CD4-positive, alpha-beta memory T cell (primary cell): ENCODE measurements at regions of chr17 and their contacts with region 1.

Region 1: DNA sequence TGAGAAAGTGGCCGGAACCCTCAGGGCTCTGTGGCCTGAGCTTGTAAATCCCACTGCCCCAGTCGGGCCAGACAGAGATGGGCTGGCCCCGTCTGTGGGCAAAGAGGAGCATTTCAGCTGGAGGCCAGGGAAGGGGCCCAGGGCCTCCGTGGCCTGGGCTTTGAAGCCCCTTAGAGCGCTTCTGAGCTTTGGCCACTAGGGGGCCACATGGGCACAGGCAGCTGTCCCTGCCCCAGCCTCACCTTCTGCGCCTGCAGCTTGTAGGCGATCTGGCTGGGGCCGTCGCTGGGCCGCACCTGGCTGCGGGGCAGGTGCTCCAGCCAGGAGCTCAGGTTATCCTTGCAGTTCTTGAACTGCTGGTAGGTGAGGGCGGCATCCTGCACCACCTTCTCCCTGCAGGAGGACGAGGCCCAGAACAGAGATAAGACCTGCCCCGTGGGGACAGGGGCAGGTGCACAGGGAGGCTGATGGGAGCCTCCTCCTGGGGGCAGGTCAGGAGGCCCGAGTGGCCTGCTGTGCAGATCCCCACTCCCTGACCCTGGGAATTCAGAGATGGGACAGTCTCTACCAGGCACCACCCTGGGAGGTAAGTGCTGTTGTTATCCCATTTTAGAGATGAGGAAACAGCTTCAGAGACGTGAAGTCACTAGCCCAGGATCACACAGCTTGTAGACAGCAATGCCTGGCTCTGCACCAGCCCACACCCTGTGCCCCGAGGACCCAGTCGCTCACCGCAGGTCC is 12.8 kb downstream of the EVPL start:
- DNase-seq: peak; percentile 72 to 79 (median 74)
- H3K4me3 ChIP-seq: no peak overlapping the region
- H3K4me3 Mint-ChIP-seq: peak overlapping the region in 2 of 8 donors; percentile 34 to 52
- H3K27ac ChIP-seq: no peak overlapping the region
- H3K27ac Mint-ChIP-seq: peak overlapping the region in 2 of 7 donors; percentile 50 to 81
- H3K4me1 ChIP-seq: peaks cover 8% of the 10 kb centered on the region
- H3K4me1 Mint-ChIP-seq: peaks cover 3 to 11% (median 6%) of the 10 kb centered on the region in 4 donors
- H3K27me3 ChIP-seq: no peaks in the 10 kb centered on the region
- H3K27me3 Mint-ChIP-seq: no peaks in the 10 kb centered on the region

Region 2: DNA sequence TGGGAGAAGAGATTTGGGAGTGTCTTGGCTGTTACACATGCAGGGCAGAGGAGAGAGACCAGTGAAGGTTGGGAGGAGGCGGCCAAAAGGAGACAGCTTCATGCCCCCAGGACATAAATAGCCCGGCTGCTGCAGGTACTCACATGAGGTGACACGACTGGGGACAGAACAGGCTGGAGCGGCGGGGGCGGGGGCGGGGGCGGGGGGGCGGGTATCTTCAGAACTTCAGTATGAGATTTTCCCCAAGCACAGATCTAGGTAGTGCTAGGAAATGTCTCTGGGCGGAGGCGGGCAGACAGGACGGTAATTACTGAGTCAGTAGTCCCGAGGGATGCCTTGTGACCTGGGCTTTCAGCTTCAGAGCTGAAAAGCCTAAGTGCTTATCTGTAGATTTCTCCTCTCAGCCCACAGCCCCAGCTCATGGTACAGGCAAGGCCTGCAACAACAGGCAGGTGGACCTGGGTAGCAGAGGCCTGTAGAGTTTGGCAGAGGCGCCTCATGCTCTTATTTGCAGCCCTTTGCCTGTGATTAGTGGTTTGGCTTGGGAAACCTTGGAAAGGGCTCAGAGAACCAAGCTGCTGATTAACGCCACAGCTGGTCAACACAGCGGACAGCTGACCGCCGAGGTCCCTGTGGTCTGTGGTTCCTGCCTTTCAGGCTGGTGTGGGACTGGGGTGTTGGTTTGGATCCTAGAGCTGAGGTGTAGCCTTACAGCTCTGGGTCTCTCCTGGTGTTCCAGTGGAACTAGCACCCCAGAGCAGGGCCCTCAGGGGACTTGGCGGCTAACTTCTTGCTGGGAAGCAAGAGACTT is 205.2 kb before region 1 on chr17:
- CTCF ChIA-PET with region 1: no interaction called
- POLR2A ChIA-PET with region 1: no interaction called
- intact Hi-C with region 1: no loop called
- DNase-seq: no peak
- H3K4me3 ChIP-seq: no peak overlapping the region
- H3K4me3 Mint-ChIP-seq: no peak overlapping the region
- H3K27ac ChIP-seq: no peak overlapping the region
- H3K27ac Mint-ChIP-seq: peak overlapping the region in 4 of 7 donors; percentile 42 to 79 (median 69)
- H3K4me1 ChIP-seq: no peaks in the 10 kb centered on the region
- H3K4me1 Mint-ChIP-seq: peaks cover 0 to 4% (median 1%) of the 10 kb centered on the region in 4 donors
- H3K27me3 ChIP-seq: no peaks in the 10 kb centered on the region
- H3K27me3 Mint-ChIP-seq: no peaks in the 10 kb centered on the region

Region 3: DNA sequence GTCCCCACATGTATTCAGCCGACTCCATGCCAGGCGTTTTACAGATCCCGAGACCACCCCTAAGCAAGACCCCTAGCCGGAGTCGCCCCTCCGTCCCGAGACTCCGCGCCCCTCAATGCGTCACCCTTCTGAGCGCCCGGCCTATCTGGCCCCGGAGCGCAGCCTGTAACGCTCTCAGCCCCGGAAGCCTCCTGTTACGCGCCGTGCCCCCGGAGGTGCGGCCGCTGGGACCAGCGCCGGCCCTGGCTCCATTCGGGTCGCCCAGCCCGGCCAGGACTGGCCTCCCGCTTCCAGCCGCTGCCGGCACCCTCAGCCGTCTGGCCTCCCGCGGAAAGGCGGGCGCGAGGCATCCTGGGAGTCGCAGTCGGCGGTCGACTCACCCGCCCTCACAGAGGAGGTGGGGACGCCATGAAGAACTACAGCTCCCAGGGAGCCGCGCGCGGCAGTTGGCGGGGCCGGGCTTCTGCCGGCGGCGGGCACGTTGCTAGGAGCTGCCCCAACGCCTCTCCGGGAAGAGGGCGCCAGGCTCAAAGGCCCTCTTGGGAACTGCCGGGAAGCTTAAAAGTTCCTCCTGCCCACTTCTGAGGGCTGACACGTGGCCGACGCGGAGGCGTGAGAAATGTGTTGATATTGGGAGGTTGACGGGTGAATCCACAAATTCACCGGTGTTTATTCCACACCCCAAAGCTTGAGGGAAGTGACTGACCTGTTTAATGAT is 73.5 kb before region 1 on chr17 and contains the start of gene FBF1:
- CTCF ChIA-PET with region 1: no interaction called
- POLR2A ChIA-PET with region 1: no interaction called
- intact Hi-C with region 1: no loop called
- DNase-seq: peak; percentile 82 to 89 (median 84)
- H3K4me3 ChIP-seq: peak within 1 kb of the TSS; percentile 63 to 74
- H3K4me3 Mint-ChIP-seq: peak within 1 kb of the TSS; percentile 84 to 93 (median 90)
- H3K27ac ChIP-seq: peak within 1 kb of the TSS; percentile 86
- H3K27ac Mint-ChIP-seq: peak within 1 kb of the TSS; percentile 48 to 96 (median 92)
- H3K4me1 ChIP-seq: peaks cover 10% of the 10 kb centered on the region
- H3K4me1 Mint-ChIP-seq: peaks cover 7 to 14% (median 10%) of the 10 kb centered on the region in 4 donors
- H3K27me3 ChIP-seq: no peaks in the 10 kb centered on the region
- H3K27me3 Mint-ChIP-seq: no peaks in the 10 kb centered on the region
- total RNA-seq, gene FBF1: 39.6 to 42.7 TPM

Region 4: GRCh38 chr17:76000016-76000754 is 14.2 kb before region 1 on chr17:
- CTCF ChIA-PET with region 1: interaction called, 27 read pairs
- POLR2A ChIA-PET with region 1: no interaction called
- intact Hi-C with region 1: no loop called
- DNase-seq: peak; percentile 51 to 59 (median 53)
- H3K4me3 ChIP-seq: no peak overlapping the region
- H3K4me3 Mint-ChIP-seq: no peak overlapping the region
- H3K27ac ChIP-seq: no peak overlapping the region
- H3K27ac Mint-ChIP-seq: no peak overlapping the region
- H3K4me1 ChIP-seq: peaks cover 14% of the 10 kb centered on the region
- H3K4me1 Mint-ChIP-seq: peaks cover 10 to 26% (median 15%) of the 10 kb centered on the region in 4 donors
- H3K27me3 ChIP-seq: no peaks in the 10 kb centered on the region
- H3K27me3 Mint-ChIP-seq: no peaks in the 10 kb centered on the region

Region 5: GRCh38 chr17:76053246-76054116 is 39.1 kb after region 1 on chr17:
- CTCF ChIA-PET with region 1: interaction called, 19 read pairs
- POLR2A ChIA-PET with region 1: no interaction called
- intact Hi-C with region 1: no loop called
- DNase-seq: no peak
- H3K4me3 ChIP-seq: no peak overlapping the region
- H3K4me3 Mint-ChIP-seq: no peak overlapping the region
- H3K27ac ChIP-seq: no peak overlapping the region
- H3K27ac Mint-ChIP-seq: peak overlapping the region in 4 of 7 donors; percentile 31 to 52 (median 42)
- H3K4me1 ChIP-seq: peaks cover 6% of the 10 kb centered on the region
- H3K4me1 Mint-ChIP-seq: peaks cover 14 to 23% (median 20%) of the 10 kb centered on the region in 4 donors
- H3K27me3 ChIP-seq: no peaks in the 10 kb centered on the region
- H3K27me3 Mint-ChIP-seq: no peaks in the 10 kb centered on the region

Region 6: DNA sequence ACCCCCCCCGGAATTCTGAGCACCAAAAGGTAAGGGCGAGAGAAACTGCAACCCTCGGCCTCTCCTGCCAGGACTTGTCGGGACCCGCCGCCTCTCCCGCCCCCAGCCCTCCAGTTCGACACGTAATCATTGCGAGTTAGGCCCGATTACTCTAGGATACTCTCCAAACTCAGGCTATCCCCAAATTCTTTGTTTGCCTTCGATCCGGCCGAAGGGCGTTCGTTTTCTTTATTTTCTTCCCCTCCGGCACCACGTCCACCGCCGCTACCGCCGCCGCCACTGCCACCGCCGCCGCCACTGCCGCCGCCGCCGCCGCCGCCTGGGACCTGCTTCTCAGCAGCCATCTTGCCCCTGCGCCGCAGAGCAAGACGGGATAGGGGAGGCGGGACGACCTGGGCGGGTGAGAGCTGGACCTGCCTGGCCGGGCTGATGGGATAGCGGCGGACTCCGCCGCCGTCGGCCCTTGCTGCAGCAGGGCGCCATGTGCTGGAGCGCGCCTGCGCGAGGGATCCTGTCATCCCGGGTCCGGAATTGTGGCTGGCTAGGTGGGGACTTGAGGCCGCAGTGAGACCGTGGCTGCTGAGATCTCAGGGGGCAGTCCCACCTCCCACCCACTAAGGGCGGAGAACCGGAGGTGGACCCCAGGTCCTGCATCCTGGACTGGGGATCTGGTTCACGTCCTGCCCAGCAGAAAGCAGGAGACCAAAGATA is 57.9 kb after region 1 on chr17 and contains the start of gene SRP68:
- CTCF ChIA-PET with region 1: no interaction called
- POLR2A ChIA-PET with region 1: interaction called, 5 read pairs
- intact Hi-C with region 1: loop called (anchors 2 kb)
- DNase-seq: peak; percentile 73 to 80 (median 77)
- H3K4me3 ChIP-seq: peak within 1 kb of the TSS; percentile 81 to 97
- H3K4me3 Mint-ChIP-seq: peak within 1 kb of the TSS; percentile 95 to 98 (median 97)
- H3K27ac ChIP-seq: peak within 1 kb of the TSS; percentile 86
- H3K27ac Mint-ChIP-seq: peak within 1 kb of the TSS; percentile 89 to 98 (median 97)
- H3K4me1 ChIP-seq: peaks cover 56% of the 10 kb centered on the region
- H3K4me1 Mint-ChIP-seq: peaks cover 31 to 60% (median 46%) of the 10 kb centered on the region in 4 donors
- H3K27me3 ChIP-seq: peaks cover 22% of the 10 kb centered on the region
- H3K27me3 Mint-ChIP-seq: peaks cover 17 to 21% of the 10 kb centered on the region in 2 donors
- total RNA-seq, gene SRP68: 86.5 to 92.4 TPM

Region 7: GRCh38 chr17:76121932-76122430 is 107.6 kb after region 1 on chr17:
- CTCF ChIA-PET with region 1: interaction called, 7 read pairs
- POLR2A ChIA-PET with region 1: no interaction called
- intact Hi-C with region 1: loop called (anchors 5 kb)
- DNase-seq: no peak
- H3K4me3 ChIP-seq: peak overlapping the region in 1 of 2 donors; percentile 60
- H3K4me3 Mint-ChIP-seq: peak overlapping the region in 4 of 8 donors; percentile 21 to 49 (median 37)
- H3K27ac ChIP-seq: peak overlapping the region; percentile 29
- H3K27ac Mint-ChIP-seq: peak overlapping the region in 6 of 7 donors; percentile 21 to 86 (median 65)
- H3K4me1 ChIP-seq: peaks cover 10% of the 10 kb centered on the region
- H3K4me1 Mint-ChIP-seq: peaks cover 4 to 12% (median 8%) of the 10 kb centered on the region in 4 donors
- H3K27me3 ChIP-seq: no peaks in the 10 kb centered on the region
- H3K27me3 Mint-ChIP-seq: no peaks in the 10 kb centered on the region

Region 8: GRCh38 chr17:76204277-76204676 is 189.9 kb after region 1 on chr17:
- CTCF ChIA-PET with region 1: no interaction called
- POLR2A ChIA-PET with region 1: no interaction called
- intact Hi-C with region 1: no loop called
- DNase-seq: no peak
- H3K4me3 ChIP-seq: no peak overlapping the region
- H3K4me3 Mint-ChIP-seq: no peak overlapping the region
- H3K27ac ChIP-seq: no peak overlapping the region
- H3K27ac Mint-ChIP-seq: peak overlapping the region in 4 of 7 donors; percentile 53 to 70 (median 56)
- H3K4me1 ChIP-seq: peaks cover 73% of the 10 kb centered on the region
- H3K4me1 Mint-ChIP-seq: peaks cover 41 to 75% (median 63%) of the 10 kb centered on the region in 4 donors
- H3K27me3 ChIP-seq: no peaks in the 10 kb centered on the region
- H3K27me3 Mint-ChIP-seq: no peaks in the 10 kb centered on the region